Activated CD4-positive, alpha-beta T cell treated with anti-CD3 and anti-CD28 coated beads for 36 hours (primary cell): ENCODE measurements at regions of chr2 and their contacts with region 1.

Region 1: DNA sequence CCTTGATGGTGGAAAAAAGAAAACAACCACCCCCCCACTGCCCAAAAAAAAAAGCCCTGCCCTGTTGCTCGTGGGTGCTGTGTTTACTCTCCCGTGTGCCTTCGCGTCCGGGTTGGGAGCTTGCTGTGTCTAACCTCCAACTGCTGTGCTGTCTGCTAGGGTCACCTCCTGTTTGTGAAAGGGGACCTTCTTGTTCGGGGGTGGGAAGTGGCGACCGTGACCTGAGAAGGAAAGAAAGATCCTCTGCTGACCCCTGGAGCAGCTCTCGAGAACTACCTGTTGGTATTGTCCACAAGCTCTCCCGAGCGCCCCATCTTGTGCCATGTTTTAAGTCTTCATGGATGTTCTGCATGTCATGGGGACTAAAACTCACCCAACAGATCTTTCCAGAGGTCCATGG is 28.0 kb downstream of the MAL start:
- DNase-seq: peak; percentile 51
- ATAC-seq: no peak
- H3K4me3 Mint-ChIP-seq: no peak overlapping the region
- H3K27ac Mint-ChIP-seq: no peak overlapping the region
- H3K4me1 Mint-ChIP-seq: peaks cover 67% of the 10 kb centered on the region
- H3K27me3 Mint-ChIP-seq: no peaks in the 10 kb centered on the region

Region 2: DNA sequence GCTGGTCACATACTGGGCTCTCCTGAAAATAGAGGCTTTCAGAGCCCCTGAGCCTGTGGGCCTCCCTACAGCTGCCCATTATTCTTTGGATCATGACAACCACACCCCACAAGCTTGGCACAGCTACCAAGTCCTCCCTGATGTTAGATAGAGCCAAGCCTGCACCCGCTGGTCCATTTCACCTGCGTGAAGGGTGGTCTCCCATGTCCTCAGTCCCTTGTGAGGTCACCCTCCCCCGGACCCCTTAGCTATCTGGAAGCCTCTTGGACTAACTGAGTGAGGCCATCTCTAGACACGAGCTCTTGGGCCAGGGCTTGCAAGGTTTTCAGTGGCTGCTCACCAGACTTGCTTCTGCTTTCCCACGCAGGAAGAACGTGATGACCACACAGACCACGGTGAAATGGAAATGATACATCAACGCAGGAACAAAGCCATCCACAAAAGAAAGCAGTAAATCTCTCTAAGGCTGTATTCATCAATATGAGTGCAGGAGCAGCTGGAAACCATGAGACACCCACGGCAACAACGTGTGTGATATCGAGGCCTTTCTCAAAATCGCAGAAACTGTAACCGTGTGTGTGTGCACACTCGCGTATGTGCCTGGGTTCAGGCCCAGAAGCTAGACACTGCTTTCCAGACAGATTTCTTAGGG is 38.2 kb before region 1 on chr2:
- CTCF ChIA-PET with region 1: no interaction called
- POLR2A ChIA-PET with region 1: no interaction called
- intact Hi-C with region 1: no loop called
- DNase-seq: peak; percentile 54
- ATAC-seq: peak; percentile 71
- H3K4me3 Mint-ChIP-seq: no peak overlapping the region
- H3K27ac Mint-ChIP-seq: peak overlapping the region; percentile 40
- H3K4me1 Mint-ChIP-seq: peaks cover 3% of the 10 kb centered on the region
- H3K27me3 Mint-ChIP-seq: no peaks in the 10 kb centered on the region

Region 3: GRCh38 chr2:95043300-95044093 is 10.0 kb before region 1 on chr2:
- CTCF ChIA-PET with region 1: interaction called, 13 read pairs
- POLR2A ChIA-PET with region 1: no interaction called
- intact Hi-C with region 1: no loop called
- DNase-seq: peak; percentile 81
- ATAC-seq: peak; percentile 73
- H3K4me3 Mint-ChIP-seq: no peak overlapping the region
- H3K27ac Mint-ChIP-seq: no peak overlapping the region
- H3K4me1 Mint-ChIP-seq: peaks cover 63% of the 10 kb centered on the region
- H3K27me3 Mint-ChIP-seq: no peaks in the 10 kb centered on the region